ENCODE measurements at regions of chr7 and their contacts with region 1.

Region 1: GRCh38 chr7:39580149-39580874 is 14.1 kb downstream of the YAE1 start:
- DNase-seq: peak; percentile 93
- H3K4me3 ChIP-seq: no peak overlapping the region
- CTCF ChIP-seq: peak; percentile 75

Region 2: DNA sequence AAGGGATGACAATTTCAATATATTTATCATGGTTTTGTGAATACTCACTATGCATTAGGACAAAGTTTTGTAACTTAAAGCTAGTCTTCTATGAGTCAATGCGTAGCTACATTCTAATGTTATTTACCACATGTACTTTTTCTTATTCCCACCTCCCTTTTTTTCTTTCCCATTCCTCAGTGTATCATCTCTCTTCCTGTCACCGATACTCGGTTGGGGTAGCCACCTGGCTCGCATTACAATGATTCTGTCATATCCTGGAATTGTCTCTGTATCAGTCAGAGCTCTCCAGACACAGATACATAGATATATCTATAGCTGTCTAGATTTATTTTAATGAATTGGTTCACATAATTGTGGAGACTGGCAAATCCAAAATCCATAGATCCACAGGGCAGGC is 33.3 kb after region 1 on chr7:
- in situ Hi-C with region 1: loop called (anchors 5 kb)
- DNase-seq: no peak
- H3K4me3 ChIP-seq: no peak overlapping the region
- CTCF ChIP-seq: no peak

Region 3: DNA sequence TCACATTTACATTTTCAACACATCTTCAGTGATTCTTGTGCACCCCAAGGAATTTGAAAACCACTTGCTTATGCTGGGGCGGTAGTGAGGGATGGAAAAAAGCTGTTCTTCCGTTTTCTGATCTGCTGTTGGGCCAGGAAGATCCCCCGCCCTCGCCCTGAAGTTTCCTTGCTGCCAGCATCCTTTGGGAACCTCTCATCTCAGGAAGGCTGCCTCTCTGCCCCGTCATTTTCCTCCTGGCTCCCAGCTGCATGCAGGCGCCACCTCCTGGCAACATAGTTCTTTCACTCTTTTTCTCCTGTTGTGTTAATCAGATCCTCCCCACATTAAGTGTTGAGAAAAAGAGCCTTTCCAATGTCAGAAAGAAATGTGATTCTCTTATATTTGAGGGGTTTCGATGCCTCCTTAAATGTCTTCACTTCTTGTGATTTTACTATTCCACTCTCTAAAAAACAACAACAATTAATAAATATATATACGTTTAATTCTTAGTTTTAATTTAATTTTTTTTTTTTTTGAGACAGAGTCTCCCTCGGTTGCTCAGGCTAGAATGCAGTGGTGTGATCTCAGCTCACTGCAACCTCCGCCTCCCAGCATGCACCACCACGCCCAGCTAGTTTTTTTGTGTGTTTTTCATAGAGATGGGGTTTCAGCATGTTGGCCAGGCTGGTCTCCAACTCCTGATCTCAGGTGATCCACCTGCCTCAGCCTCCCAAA is 165.9 kb after region 1 on chr7:
- in situ Hi-C with region 1: loop called (anchors 10 kb)
- DNase-seq: peak; percentile 70
- H3K4me3 ChIP-seq: no peak overlapping the region
- CTCF ChIP-seq: peak; percentile 78